HepG2 (cell line): ENCODE measurements at regions of chr4 and their contacts with region 1.

Region 1: GRCh38 chr4:8886612-8887406 is 15.2 kb upstream of the HMX1 start:
- DNase-seq: no peak
- ATAC-seq: no peak
- H3K4me3 ChIP-seq: no peak overlapping the region
- H3K27ac ChIP-seq: no peak overlapping the region
- H3K4me1 ChIP-seq: no peaks in the 10 kb centered on the region
- H3K27me3 ChIP-seq: peaks cover 9 to 76% of the 10 kb centered on the region in 2 experiments; a peak in 4 of 5 replicates
- CTCF ChIP-seq: 0 out of 2 replicates have a peak, but pooled peaks have one; percentile 29
- EP300 ChIP-seq: no peak
- POLR2A ChIP-seq: no peak
- RAD21 ChIP-seq: no peak

Region 2: GRCh38 chr4:8688041-8688937 is 198.5 kb before region 1 on chr4:
- CTCF ChIA-PET with region 1: no interaction called
- POLR2A ChIA-PET with region 1: no interaction called
- in situ Hi-C with region 1: loop called (anchors 10 kb)
- intact Hi-C with region 1: loop called (anchors 10 kb)
- DNase-seq: no peak
- ATAC-seq: peak; percentile 89
- H3K4me3 ChIP-seq: no peak overlapping the region
- H3K27ac ChIP-seq: no peak overlapping the region
- H3K4me1 ChIP-seq: no peaks in the 10 kb centered on the region
- H3K27me3 ChIP-seq: peaks cover 5 to 36% of the 10 kb centered on the region in 2 experiments; a peak in 3 of 5 replicates
- CTCF ChIP-seq: peak; percentile 74
- EP300 ChIP-seq: no peak
- POLR2A ChIP-seq: no peak
- RAD21 ChIP-seq: no peak

Region 3: GRCh38 chr4:8724823-8725530 is 161.8 kb before region 1 on chr4:
- CTCF ChIA-PET with region 1: no interaction called
- POLR2A ChIA-PET with region 1: no interaction called
- in situ Hi-C with region 1: no loop called
- intact Hi-C with region 1: no loop called
- DNase-seq: no peak
- ATAC-seq: peak; percentile 26; the same call in 2 of the 3 replicates
- H3K4me3 ChIP-seq: no peak overlapping the region
- H3K27ac ChIP-seq: no peak overlapping the region
- H3K4me1 ChIP-seq: no peaks in the 10 kb centered on the region
- H3K27me3 ChIP-seq: peaks cover 9 to 60% of the 10 kb centered on the region in 2 experiments
- CTCF ChIP-seq: no peak
- EP300 ChIP-seq: no peak
- POLR2A ChIP-seq: no peak
- RAD21 ChIP-seq: no peak